ENCODE measurements at regions of chr7 and their contacts with region 1.

Region 1: DNA sequence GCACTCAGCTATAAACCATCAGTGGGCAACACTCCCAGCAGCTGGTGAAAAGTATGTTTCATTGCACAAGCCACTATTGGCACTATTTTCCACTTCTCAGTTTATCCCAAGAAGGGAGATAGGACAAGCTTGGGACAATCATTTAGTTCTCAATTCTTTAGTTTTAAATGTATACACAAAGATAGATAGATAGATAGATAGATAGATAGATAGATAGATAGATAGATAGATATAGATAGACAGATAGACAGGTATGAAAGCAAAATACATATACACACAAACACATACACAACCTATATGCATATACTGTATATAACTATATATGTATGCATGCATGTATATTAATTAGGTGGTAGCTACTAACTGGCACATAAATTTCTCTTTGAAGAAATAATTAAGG is 411.6 kb upstream of the KCND2 start:
- DNase-seq: no peak
- H3K4me3 Mint-ChIP-seq: no peak overlapping the region
- H3K27ac Mint-ChIP-seq: no peak overlapping the region
- H3K4me1 Mint-ChIP-seq: no peaks in the 10 kb centered on the region
- H3K27me3 Mint-ChIP-seq: no peaks in the 10 kb centered on the region

Region 2: GRCh38 chr7:119925581-119926289 is 64.3 kb after region 1 on chr7:
- CTCF ChIA-PET with region 1: no interaction called
- POLR2A ChIA-PET with region 1: no interaction called
- intact Hi-C with region 1: loop called (anchors 10 kb)
- DNase-seq: no peak
- H3K4me3 Mint-ChIP-seq: no peak overlapping the region
- H3K27ac Mint-ChIP-seq: no peak overlapping the region
- H3K4me1 Mint-ChIP-seq: no peaks in the 10 kb centered on the region
- H3K27me3 Mint-ChIP-seq: no peaks in the 10 kb centered on the region

Measured in activated CD4-positive, alpha-beta memory T cell treated with anti-CD3 and anti-CD28 coated beads for 36 hours (primary cell).